CD8-positive, alpha-beta T cell (primary cell): ENCODE measurements at regions of chr5 and their contacts with region 1.

Region 1: GRCh38 chr5:138178516-138179276 is at the starts of genes BRD8 and KIF20A:
- DNase-seq: peak; percentile 74 to 94 (median 88)
- ATAC-seq: peak; percentile 88
- H3K4me3 ChIP-seq: peak within 1 kb of the TSS; percentile 67 to 92
- H3K4me3 Mint-ChIP-seq: peak within 1 kb of the TSS; percentile 46
- H3K27ac ChIP-seq: peak within 1 kb of the TSS; percentile 42 to 77
- H3K27ac Mint-ChIP-seq: no peak within 1 kb of the TSS
- H3K4me1 ChIP-seq: peaks cover 15% of the 10 kb centered on the region
- H3K4me1 Mint-ChIP-seq: peaks cover 10% of the 10 kb centered on the region
- H3K27me3 ChIP-seq: no peaks in the 10 kb centered on the region
- H3K27me3 Mint-ChIP-seq: no peaks in the 10 kb centered on the region
- CTCF ChIP-seq: no peak
- total RNA-seq, gene BRD8: 13.0 to 15.0 TPM
- total RNA-seq, gene KIF20A: 0.19 TPM in 1 of 2 experiments, not detected in the other

Region 2: GRCh38 chr5:138331449-138332368 is 153.0 kb after region 1 on chr5 and contains the start of gene CDC25C:
- CTCF ChIA-PET with region 1: interaction called, 5 read pairs
- POLR2A ChIA-PET with region 1: interaction called, 4 read pairs
- intact Hi-C with region 1: loop called (anchors 2 kb)
- DNase-seq: peak; percentile 91 to 99 (median 95)
- ATAC-seq: peak; percentile 100
- H3K4me3 ChIP-seq: peak within 1 kb of the TSS; percentile 52 to 69
- H3K4me3 Mint-ChIP-seq: peak within 1 kb of the TSS; percentile 86
- H3K27ac ChIP-seq: peak within 1 kb of the TSS in 1 of 2 experiments; percentile 58
- H3K27ac Mint-ChIP-seq: peak within 1 kb of the TSS; percentile 45
- H3K4me1 ChIP-seq: peaks cover 5% of the 10 kb centered on the region
- H3K4me1 Mint-ChIP-seq: peaks cover 16% of the 10 kb centered on the region
- H3K27me3 ChIP-seq: no peaks in the 10 kb centered on the region
- H3K27me3 Mint-ChIP-seq: no peaks in the 10 kb centered on the region
- CTCF ChIP-seq: no peak
- total RNA-seq, gene CDC25C: not detected

Region 3: DNA sequence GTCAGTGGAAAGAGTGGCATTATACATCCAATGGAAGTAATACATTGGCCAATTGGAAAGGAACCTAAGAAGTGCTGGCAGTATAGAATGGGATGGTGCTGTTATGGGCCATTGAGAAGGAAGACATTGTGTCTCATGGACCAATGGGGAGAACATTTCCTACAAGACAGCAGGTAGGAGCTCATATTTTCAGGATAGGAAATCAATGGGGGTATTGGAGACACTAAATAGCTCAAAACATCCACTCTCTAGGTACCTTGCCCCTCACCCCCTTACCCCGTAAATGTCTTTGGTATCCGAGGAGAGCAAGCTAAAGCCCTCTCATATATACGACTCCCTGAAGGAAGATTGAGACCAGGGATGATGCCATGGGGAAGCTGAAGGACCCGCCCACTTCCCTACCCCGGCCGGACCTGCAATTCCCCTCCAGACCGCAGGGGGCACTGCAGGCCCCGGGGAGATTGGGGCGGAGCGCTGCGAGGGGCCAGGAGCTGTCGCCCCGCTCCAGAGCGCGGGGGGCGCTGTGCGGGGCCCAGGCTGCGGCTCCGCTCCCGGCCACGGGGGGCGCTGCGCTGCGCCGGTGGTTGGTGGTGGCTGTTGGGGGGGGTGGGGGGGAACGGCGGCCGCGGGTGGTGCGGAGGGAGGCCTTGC is 173.5 kb after region 1 on chr5 and contains the start of gene KDM3B:
- CTCF ChIA-PET with region 1: interaction called, 8 read pairs
- POLR2A ChIA-PET with region 1: interaction called, 9 read pairs
- intact Hi-C with region 1: loop called (anchors 1 kb)
- DNase-seq: peak; percentile 86 to 96 (median 92)
- ATAC-seq: peak; percentile 89
- H3K4me3 ChIP-seq: peak within 1 kb of the TSS; percentile 87 to 97
- H3K4me3 Mint-ChIP-seq: peak within 1 kb of the TSS; percentile 97
- H3K27ac ChIP-seq: peak within 1 kb of the TSS; percentile 83 to 89
- H3K27ac Mint-ChIP-seq: peak within 1 kb of the TSS; percentile 97
- H3K4me1 ChIP-seq: peaks cover 34% of the 10 kb centered on the region
- H3K4me1 Mint-ChIP-seq: peaks cover 47% of the 10 kb centered on the region
- H3K27me3 ChIP-seq: no peaks in the 10 kb centered on the region
- H3K27me3 Mint-ChIP-seq: no peaks in the 10 kb centered on the region
- CTCF ChIP-seq: peak; percentile 99
- total RNA-seq, gene KDM3B: 60.2 to 60.3 TPM

Region 4: DNA sequence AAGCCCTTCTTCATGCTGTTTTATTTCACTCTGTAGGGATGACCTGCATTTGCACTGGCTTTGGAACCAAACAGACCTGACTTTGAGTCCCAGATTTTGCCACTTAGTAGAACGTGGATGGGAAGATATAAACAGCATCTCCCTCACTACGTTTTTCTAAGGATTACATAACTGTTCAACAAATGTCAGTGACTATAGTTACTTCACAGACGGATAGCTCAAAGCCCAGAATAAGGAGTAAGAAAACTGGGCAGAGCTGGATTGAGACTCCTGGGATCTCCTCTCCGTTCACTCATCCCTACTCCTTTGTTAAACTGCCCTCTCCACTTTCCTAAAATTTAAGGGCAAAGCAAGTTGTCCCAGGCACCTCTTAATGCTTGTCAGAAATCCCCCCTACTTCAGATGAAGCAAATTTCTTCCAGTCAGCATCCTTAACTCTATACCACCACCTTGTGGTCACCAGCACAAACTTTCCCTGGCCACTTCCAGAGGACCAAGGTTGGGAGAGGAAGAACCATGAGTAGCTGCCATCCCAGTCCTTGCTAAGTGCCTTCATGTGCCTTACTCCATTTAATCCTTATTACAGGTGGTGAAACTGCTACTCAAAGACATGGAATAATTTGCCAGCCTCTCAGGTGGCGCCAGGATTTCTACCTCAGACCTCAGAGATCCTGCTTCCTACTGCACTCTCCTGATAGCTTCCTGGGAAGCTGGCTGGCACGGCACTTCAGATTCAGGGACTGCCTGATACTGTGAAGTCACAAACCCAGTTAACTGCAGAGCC is 325.0 kb after region 1 on chr5:
- CTCF ChIA-PET with region 1: interaction called, 6 read pairs
- POLR2A ChIA-PET with region 1: no interaction called
- intact Hi-C with region 1: loop called (anchors 1 to 5 kb)
- DNase-seq: peak in 5 of 9 experiments; percentile 2 to 79 (median 36)
- ATAC-seq: peak; percentile 79
- H3K4me3 ChIP-seq: no peak overlapping the region
- H3K4me3 Mint-ChIP-seq: no peak overlapping the region
- H3K27ac ChIP-seq: no peak overlapping the region
- H3K27ac Mint-ChIP-seq: no peak overlapping the region
- H3K4me1 ChIP-seq: no peaks in the 10 kb centered on the region
- H3K4me1 Mint-ChIP-seq: peaks cover 2% of the 10 kb centered on the region
- H3K27me3 ChIP-seq: no peaks in the 10 kb centered on the region
- H3K27me3 Mint-ChIP-seq: no peaks in the 10 kb centered on the region
- CTCF ChIP-seq: peak; percentile 72

Region 5: GRCh38 chr5:138579517-138579863 is 400.8 kb after region 1 on chr5:
- CTCF ChIA-PET with region 1: no interaction called
- POLR2A ChIA-PET with region 1: no interaction called
- intact Hi-C with region 1: no loop called
- DNase-seq: no peak
- ATAC-seq: no peak
- H3K4me3 ChIP-seq: no peak overlapping the region
- H3K4me3 Mint-ChIP-seq: no peak overlapping the region
- H3K27ac ChIP-seq: no peak overlapping the region
- H3K27ac Mint-ChIP-seq: no peak overlapping the region
- H3K4me1 ChIP-seq: peaks cover 6% of the 10 kb centered on the region
- H3K4me1 Mint-ChIP-seq: peaks cover 18% of the 10 kb centered on the region
- H3K27me3 ChIP-seq: no peaks in the 10 kb centered on the region
- H3K27me3 Mint-ChIP-seq: no peaks in the 10 kb centered on the region
- CTCF ChIP-seq: peak; percentile 42